ENCODE measurements at regions of chrX and their contacts with region 1.

Region 1: GRCh38 chrX:22748093-22748999 is 251.4 kb upstream of the DDX53 start:
- DNase-seq: no peak
- H3K4me3 ChIP-seq: no peak overlapping the region
- H3K27me3 ChIP-seq: no peaks in the 10 kb centered on the region
- CTCF ChIP-seq: peak; percentile 70

Region 2: DNA sequence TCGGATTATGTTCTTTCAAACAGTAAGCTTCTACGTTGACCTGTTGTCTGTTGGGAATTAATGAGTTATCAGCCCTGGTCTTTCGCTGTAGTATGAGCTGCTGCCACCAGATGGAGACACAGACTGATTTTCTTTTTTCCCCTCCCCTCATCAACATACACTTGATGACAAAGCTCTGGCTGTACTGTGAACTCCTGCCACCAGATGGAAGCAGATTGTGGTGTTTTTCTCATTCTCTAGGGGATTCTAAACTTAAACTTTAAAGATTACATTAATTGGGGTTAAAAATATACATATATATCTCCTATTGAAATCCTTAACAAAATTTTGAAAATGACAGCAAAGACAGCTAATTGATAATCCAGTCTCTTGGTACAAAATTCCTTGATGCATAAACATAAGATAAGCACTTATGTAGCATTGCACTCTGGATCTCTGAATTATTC is 763.0 kb before region 1 on chrX:
- CTCF ChIA-PET with region 1: interaction called, 17 read pairs
- POLR2A ChIA-PET with region 1: no interaction called
- DNase-seq: no peak
- H3K4me3 ChIP-seq: no peak overlapping the region
- H3K27me3 ChIP-seq: no peaks in the 10 kb centered on the region
- CTCF ChIP-seq: peak; percentile 77

Region 3: DNA sequence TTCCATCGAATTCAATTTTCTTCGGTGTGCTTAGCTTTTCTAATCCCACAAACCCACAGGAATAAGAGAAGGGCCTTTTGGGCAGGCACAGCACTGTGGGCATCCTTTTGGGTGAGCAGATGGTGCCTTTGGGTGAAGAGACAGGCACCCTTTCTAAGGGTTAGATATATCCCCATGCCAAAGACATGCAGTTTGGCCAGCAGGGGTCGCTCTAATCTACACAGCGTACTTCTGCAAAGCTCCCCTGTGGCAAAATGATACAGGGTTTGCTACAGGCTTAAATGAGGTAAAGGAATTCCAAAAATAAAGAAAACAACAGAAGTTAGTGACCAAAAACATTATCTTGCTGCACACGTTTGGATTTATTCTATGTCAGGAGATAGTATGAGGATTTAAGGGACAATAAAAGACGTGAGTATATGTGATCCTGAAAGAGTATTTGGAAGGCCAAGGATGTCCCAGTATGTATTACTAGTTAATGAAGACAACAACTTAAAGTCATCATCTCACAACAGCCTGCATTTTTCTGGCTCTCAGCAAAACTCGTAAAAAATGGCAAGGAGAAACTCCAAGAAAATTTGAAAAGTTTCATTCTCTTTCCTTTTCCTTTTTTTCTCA is 666.8 kb before region 1 on chrX:
- CTCF ChIA-PET with region 1: interaction called, 11 read pairs
- POLR2A ChIA-PET with region 1: no interaction called
- DNase-seq: no peak
- H3K4me3 ChIP-seq: no peak overlapping the region
- H3K27me3 ChIP-seq: no peaks in the 10 kb centered on the region
- CTCF ChIP-seq: peak; percentile 74

Region 4: DNA sequence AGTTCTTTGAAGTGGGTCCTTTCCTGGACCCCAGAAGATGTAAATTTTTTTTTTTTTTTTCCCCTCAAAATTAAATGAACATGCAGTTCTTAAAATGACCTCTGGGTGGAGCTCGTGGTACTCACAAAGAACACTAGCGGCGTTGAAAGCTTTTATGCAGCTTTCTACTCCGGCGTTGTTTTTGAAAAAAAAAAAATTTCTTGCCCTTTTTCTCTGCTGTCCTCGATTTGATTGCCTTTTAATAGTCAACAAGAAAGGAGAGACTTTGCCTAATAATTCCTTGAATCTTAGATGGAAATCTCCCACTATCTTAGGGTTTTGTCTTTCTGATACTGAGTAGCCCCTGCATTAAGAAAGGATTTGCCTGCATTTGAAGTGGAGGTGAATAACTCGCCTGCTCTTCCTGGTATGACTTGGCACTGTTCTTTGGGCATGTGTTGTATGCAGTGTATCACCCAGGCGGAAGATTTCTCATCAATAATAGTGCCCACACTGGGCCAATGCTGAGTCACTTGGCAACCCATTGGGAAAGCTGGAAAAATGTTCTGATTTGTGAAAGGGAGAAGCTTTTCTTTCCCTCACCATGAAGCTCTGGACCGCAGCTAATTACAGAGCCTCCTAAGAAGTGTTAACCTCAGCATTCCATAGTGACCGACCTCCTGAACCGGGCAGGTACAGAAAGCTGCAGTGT is 612.2 kb before region 1 on chrX:
- CTCF ChIA-PET with region 1: interaction called, 18 read pairs
- POLR2A ChIA-PET with region 1: no interaction called
- DNase-seq: no peak
- H3K4me3 ChIP-seq: no peak overlapping the region
- H3K27me3 ChIP-seq: no peaks in the 10 kb centered on the region
- CTCF ChIP-seq: peak; percentile 47

Measured in BJ (cell line).